Posterior cingulate gyrus (tissue), 11 donors: ENCODE measurements at regions of chr17 and their contacts with region 1.

Region 1: DNA sequence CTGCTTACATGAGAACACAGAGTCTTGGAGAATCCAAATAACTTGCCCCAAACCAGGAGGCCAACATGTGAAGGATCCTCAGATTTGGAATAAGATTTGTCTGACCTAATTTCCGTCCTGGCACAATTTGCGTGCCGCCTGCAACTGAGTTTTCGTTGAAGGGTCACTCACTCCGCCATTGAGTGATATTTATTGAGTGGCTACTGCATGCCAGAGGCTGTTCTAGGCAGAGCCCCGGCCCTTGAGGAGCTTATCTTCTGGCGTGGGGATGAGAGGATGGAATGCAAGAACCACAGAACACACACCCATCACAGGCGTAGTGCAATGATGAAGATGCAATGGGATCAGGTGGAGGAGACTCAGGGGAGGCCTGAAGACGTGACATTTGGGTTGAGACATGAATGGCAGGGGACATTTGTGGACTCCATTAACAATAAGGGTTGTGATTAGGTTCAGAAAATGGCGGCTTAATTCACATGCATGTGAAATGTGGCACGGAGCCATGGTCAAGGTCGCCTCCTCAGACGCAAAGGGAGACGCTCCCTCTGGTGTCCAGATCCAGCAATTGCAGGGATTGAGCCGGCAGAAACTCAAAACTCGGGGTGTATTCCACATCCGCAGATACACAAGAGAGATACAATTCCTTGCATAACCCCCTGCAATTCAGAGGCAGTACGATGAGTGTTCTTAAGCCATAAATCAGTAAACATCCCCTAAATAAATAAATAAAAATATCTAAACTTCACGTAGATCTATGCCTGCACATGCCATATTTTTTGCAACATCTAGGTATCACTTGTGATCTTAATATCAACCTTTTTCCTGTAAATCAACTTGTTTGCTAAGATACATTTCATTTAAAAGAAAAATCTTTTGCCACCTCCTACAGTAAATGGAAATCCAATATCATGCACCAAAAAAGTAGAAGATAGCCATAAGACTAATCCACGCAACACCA is 57.9 kb upstream of the CACNG4 start:
- DNase-seq: peak; percentile 64 to 96 (median 82)

Region 2: GRCh38 chr17:66715745-66716156 is 190.8 kb before region 1 on chr17:
- intact Hi-C with region 1: loop called (anchors 1 kb)
- DNase-seq: no peak

Region 3: GRCh38 chr17:66747578-66748275 is 158.9 kb before region 1 on chr17:
- intact Hi-C with region 1: no loop called
- DNase-seq: peak in 1 of 10 donors; percentile 46